ENCODE measurements at regions of chr19 and their contacts with region 1.

Region 1: GRCh38 chr19:9621156-9622037 is at the start of gene ZNF561:
- DNase-seq: peak; percentile 54 to 88
- H3K4me3 ChIP-seq: peak within 1 kb of the TSS; percentile 81 to 99 (median 94)
- H3K27ac ChIP-seq: peak within 1 kb of the TSS; percentile 99
- H3K4me1 ChIP-seq: peaks cover 0 to 5% (median 3%) of the 10 kb centered on the region in 4 experiments; a peak in 3 of 7 replicates
- H3K27me3 ChIP-seq: no peaks in the 10 kb centered on the region
- CTCF ChIP-seq: no peak
- EP300 ChIP-seq: no peak
- POLR2A ChIP-seq: peak; percentile 80 to 87
- RAD21 ChIP-seq: peak in 1 of 2 experiments; percentile 3; a peak in 1 of 4 replicates
- total RNA-seq, gene ZNF561: 57.6 and 64.7 TPM in 2 replicates

Region 2: DNA sequence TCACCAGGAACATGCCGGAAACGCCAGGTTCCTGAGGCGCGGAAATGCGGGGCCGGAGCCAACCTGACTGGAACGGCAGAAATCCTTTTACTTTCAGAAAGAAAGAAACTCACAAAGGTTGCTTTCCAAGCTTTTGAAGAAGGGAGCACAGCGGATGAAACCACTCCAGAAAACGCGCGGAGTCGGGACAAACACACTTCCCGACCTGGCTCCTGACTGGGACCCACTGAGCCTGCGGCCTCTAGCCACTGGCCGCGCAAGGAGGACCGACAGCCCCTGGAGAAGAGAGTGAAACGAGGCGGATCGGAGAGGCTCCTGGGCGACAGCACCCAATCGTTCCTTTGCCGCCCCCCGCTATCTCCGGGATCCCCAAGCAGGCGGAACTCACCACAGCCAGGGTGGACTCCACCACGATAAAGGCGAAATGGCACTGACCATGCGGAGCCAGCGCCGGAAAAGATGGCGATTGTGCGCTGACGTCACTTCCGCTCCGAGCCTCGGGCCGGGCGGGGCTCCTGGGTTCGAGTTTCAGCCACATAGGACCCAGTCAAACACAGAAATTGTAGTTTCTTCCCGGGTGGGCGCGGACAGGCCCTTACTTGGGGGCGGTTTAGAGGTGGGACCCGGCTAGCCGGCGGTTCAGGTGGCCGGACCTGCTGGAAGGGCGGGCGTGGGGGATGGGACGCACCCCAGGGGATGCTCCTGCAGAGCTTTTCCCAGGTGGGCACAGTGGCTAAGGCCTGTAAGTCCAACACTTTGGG is 37.1 kb before region 1 on chr19 and contains the start of gene ZNF121:
- CTCF ChIA-PET with region 1: interaction called, 8 read pairs
- POLR2A ChIA-PET with region 1: interaction called, 19 read pairs
- DNase-seq: peak; percentile 56 to 96
- H3K4me3 ChIP-seq: peak within 1 kb of the TSS; percentile 76 to 99 (median 89)
- H3K27ac ChIP-seq: peak within 1 kb of the TSS; percentile 96
- H3K4me1 ChIP-seq: peaks cover 0 to 6% (median 3%) of the 10 kb centered on the region in 4 experiments; a peak in 5 of 7 replicates
- H3K27me3 ChIP-seq: no peaks in the 10 kb centered on the region
- CTCF ChIP-seq: no peak
- EP300 ChIP-seq: no peak
- POLR2A ChIP-seq: peak; percentile 96 to 99
- RAD21 ChIP-seq: no peak
- total RNA-seq, gene ZNF121: 194 and 220 TPM in 2 replicates

Region 3: DNA sequence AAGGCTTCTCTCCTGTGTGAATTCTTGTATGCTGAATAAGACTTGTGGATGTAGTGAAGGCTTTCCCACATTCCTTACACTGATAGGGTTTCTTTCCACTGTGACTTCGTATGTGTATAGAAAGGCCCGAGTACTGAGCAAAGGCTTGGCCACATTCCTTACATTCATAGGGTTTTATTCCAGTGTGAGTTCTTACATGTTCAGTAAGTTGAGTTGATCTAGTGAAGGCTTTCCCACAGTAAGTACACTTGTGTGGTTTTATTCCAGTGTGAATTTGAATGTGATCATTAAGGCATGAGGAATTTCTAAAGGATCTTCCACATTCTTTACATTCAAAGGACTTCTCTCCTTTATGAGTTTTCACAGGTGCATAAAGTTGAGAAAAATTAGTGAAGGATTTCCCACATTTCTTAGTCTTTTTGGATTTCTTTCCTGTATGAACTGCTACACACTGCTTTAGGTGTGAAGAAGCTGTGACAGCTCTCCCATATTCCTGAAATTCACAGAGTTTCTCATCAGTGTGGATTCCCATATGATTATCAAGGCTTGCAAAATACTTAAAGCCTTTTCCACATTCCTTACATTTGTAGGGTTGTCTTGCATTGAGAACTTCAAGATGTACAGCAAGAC is 10.8 kb before region 1 on chr19:
- CTCF ChIA-PET with region 1: interaction called, 3 read pairs
- POLR2A ChIA-PET with region 1: interaction called, 10 read pairs
- DNase-seq: no peak
- H3K4me3 ChIP-seq: no peak overlapping the region
- H3K27ac ChIP-seq: no peak overlapping the region
- H3K4me1 ChIP-seq: no peaks in the 10 kb centered on the region
- H3K27me3 ChIP-seq: no peaks in the 10 kb centered on the region; a peak in 1 of 7 replicates
- CTCF ChIP-seq: no peak
- EP300 ChIP-seq: no peak
- POLR2A ChIP-seq: no peak
- RAD21 ChIP-seq: no peak

Region 4: DNA sequence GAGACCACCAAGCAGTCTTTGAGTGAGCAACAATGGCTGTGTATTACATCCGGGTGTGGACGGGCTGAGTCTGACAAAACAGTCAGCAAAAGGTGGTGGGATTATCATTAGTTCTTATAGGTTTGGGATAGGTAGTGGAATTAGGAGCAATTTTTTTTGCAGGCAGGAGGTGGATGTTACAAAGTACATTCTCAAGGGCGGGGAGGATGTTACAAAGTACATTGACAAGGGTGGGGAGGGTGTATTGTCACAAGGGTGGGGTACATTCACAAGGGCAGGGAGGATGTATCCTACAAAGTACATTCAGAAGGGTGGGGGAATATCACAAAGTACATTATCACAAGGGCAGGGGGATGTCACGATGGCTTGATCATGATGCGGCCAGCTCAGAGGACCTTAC is 14.6 kb after region 1 on chr19:
- CTCF ChIA-PET with region 1: interaction called, 10 read pairs
- POLR2A ChIA-PET with region 1: interaction called, 4 read pairs
- DNase-seq: no peak
- H3K4me3 ChIP-seq: no peak overlapping the region
- H3K27ac ChIP-seq: no peak overlapping the region
- H3K4me1 ChIP-seq: no peaks in the 10 kb centered on the region
- H3K27me3 ChIP-seq: no peaks in the 10 kb centered on the region
- CTCF ChIP-seq: no peak
- EP300 ChIP-seq: no peak
- POLR2A ChIP-seq: no peak
- RAD21 ChIP-seq: no peak

Region 5: GRCh38 chr19:9768175-9769112 is 147.0 kb after region 1 on chr19 and contains the start of gene ZNF846:
- CTCF ChIA-PET with region 1: no interaction called
- POLR2A ChIA-PET with region 1: interaction called, 11 read pairs
- DNase-seq: peak; percentile 90 to 93
- H3K4me3 ChIP-seq: peak within 1 kb of the TSS; percentile 51 to 90 (median 86)
- H3K27ac ChIP-seq: peak within 1 kb of the TSS; percentile 80
- H3K4me1 ChIP-seq: no peaks in the 10 kb centered on the region
- H3K27me3 ChIP-seq: no peaks in the 10 kb centered on the region
- CTCF ChIP-seq: no peak
- EP300 ChIP-seq: peak in 1 of 2 experiments; percentile 68; a peak in 1 of 3 replicates
- POLR2A ChIP-seq: peak; percentile 53 to 89
- RAD21 ChIP-seq: peak in 1 of 2 experiments; percentile 6; a peak in 3 of 4 replicates
- total RNA-seq, gene ZNF846: 9.0 and 9.2 TPM in 2 replicates

Region 6: DNA sequence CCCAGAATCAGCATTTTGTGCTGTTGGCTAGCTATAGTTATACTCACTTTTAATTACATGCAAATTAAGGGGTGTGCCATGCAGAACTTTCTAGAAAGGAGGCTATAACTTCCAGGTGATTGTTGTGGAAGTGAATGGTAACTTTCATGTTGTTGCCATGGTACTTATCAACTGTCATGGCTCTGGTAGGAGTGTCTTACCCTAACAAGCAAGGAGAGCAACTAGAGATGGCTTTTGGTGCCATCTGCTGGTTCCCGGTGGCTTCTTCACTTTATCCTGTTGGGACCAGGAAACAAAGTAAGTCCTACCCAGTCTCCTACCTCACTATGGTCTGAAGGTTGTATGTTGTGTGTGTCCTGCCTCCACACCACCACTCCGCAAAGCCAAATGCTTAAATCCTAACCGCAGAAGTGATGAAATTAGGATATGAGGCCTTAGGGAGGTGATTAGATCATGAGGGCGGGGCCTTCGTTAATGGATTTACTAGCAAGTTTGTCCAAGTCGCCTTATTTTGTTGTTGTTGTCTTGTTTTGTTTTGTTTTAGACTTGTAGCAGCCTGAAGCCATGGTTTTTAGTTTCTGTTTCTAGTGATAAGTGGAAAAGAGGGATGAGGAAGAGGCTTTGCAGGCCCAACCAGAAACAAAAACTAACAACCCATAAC is 174.8 kb after region 1 on chr19:
- CTCF ChIA-PET with region 1: interaction called, 47 read pairs
- POLR2A ChIA-PET with region 1: interaction called, 14 read pairs
- DNase-seq: peak; percentile 68 to 84
- H3K4me3 ChIP-seq: no peak overlapping the region
- H3K27ac ChIP-seq: no peak overlapping the region
- H3K4me1 ChIP-seq: peaks cover 0 to 2% (median 0%) of the 10 kb centered on the region in 4 experiments; a peak in 2 of 7 replicates
- H3K27me3 ChIP-seq: no peaks in the 10 kb centered on the region
- CTCF ChIP-seq: peak; percentile 37 to 94 (median 80)
- EP300 ChIP-seq: no peak
- POLR2A ChIP-seq: no peak
- RAD21 ChIP-seq: peak; percentile 95 to 96